SK-N-SH (cell line): ENCODE measurements at regions of chr13 and their contacts with region 1.

Region 1: GRCh38 chr13:102870677-102871415 is 25.0 kb downstream of the ERCC5 start:
- DNase-seq: peak; percentile 79
- H3K4me3 ChIP-seq: no peak overlapping the region; a peak in 1 of 4 replicates
- H3K27ac ChIP-seq: no peak overlapping the region
- H3K4me1 ChIP-seq: peaks cover 0 to 5% of the 10 kb centered on the region in 2 experiments; a peak in 1 of 4 replicates
- H3K27me3 ChIP-seq: no peaks in the 10 kb centered on the region
- CTCF ChIP-seq: peak; percentile 90
- EP300 ChIP-seq: no peak
- RAD21 ChIP-seq: peak; percentile 90

Region 2: DNA sequence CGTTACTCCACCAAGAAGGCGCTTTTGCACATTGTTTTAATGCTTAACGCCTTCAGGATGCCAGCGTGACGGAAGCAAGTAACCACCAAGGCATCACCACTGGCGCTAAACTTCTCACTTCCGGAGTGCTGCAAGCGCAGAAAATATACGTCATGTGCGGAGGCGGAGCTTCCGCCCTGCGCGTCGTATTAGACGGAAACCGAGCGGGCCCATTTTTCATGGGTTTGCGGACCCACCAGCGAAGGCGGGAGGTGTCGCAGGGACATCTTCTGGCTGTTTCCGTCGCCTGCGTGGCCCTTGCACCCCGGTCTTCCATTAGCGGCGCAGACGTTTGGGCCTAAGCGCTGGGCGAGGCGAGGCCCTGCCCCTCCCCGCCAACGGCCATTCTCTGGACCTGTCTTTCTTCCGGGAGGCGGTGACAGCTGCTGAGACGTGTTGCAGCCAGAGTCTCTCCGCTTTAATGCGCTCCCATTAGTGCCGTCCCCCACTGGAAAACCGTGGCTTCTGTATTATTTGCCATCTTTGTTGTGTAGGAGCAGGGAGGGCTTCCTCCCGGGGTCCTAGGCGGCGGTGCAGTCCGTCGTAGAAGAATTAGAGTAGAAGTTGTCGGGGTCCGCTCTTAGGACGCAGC is 25.1 kb before region 1 on chr13 and contains the start of gene ERCC5:
- CTCF ChIA-PET with region 1: interaction called, 17 read pairs
- POLR2A ChIA-PET with region 1: no interaction called
- DNase-seq: peak; percentile 81
- H3K4me3 ChIP-seq: peak within 1 kb of the TSS; percentile 96 to 99
- H3K27ac ChIP-seq: peak within 1 kb of the TSS; percentile 87 to 96
- H3K4me1 ChIP-seq: peaks cover 0 to 12% of the 10 kb centered on the region in 2 experiments; a peak in 3 of 4 replicates
- H3K27me3 ChIP-seq: no peaks in the 10 kb centered on the region
- CTCF ChIP-seq: no peak
- EP300 ChIP-seq: peak; percentile 31 to 45; a peak in 1 of 4 replicates
- RAD21 ChIP-seq: peak; percentile 27; the same call in 1 of the 2 replicates
- polyA plus RNA-seq, gene ERCC5: 14.1 and 19.0 TPM in 2 replicates

Region 3: GRCh38 chr13:102854675-102855074 is 16.2 kb before region 1 on chr13:
- CTCF ChIA-PET with region 1: interaction called, 26 read pairs
- POLR2A ChIA-PET with region 1: no interaction called
- DNase-seq: no peak
- H3K4me3 ChIP-seq: no peak overlapping the region
- H3K27ac ChIP-seq: no peak overlapping the region
- H3K4me1 ChIP-seq: peaks cover 0 to 3% of the 10 kb centered on the region in 2 experiments; a peak in 1 of 4 replicates
- H3K27me3 ChIP-seq: no peaks in the 10 kb centered on the region
- CTCF ChIP-seq: no peak
- EP300 ChIP-seq: no peak
- RAD21 ChIP-seq: no peak

Region 4: DNA sequence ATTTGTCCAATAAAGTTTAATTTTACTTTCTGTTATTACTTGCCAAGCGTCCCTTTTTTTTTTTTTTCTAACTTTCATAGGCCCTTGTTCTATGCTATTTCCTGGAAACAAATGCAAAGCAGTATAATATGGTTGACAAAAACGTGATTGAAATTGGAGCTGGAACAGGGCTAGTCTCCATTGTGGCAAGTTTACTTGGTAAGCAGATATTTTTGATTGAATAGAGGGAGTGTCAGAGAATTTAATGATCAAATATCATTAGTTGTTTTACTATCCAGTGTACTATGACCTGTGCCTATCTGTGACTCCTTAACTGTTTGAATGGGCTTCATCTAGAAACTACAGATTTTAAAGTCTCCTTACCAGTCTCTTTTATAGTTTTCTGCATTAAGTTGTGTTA is 21.7 kb after region 1 on chr13:
- CTCF ChIA-PET with region 1: interaction called, 26 read pairs
- POLR2A ChIA-PET with region 1: no interaction called
- DNase-seq: no peak
- H3K4me3 ChIP-seq: no peak overlapping the region
- H3K27ac ChIP-seq: no peak overlapping the region
- H3K4me1 ChIP-seq: no peaks in the 10 kb centered on the region
- H3K27me3 ChIP-seq: no peaks in the 10 kb centered on the region
- CTCF ChIP-seq: no peak
- EP300 ChIP-seq: no peak
- RAD21 ChIP-seq: no peak

Region 5: DNA sequence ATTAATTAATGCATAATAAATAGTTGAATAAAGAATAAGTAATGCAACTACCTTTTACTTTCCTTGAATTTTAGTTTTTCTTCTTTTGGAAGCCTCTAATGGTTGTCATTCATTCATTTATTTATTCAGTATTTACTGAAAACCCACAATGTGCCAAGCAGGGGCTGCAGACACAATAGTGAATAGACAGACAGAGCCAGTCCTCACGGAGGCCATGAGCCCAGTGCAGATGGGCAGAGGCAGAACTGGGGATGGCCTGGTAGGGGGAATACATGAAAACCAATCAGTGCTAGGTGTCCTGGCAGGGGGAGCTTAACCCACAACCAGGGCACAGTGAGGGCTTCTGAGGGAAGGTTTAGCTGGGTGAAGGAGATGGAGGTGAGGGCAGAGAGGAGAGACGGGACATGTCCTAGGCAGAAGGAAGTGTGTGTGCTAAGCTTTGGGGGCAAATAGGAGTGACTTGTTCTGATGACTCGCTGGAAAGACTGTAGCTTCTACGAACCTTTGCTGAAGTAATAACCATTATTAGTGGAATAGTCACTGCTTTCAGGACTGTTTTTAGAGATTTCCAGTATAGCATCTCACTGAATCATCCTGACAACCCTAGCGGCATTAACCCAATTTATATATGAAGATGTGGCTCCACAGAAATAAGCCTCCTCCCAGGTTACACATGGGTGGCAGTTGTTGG is 30.9 kb after region 1 on chr13:
- CTCF ChIA-PET with region 1: interaction called, 26 read pairs
- POLR2A ChIA-PET with region 1: no interaction called
- DNase-seq: no peak
- H3K4me3 ChIP-seq: no peak overlapping the region
- H3K27ac ChIP-seq: no peak overlapping the region
- H3K4me1 ChIP-seq: peaks cover 0 to 2% of the 10 kb centered on the region in 2 experiments; a peak in 2 of 4 replicates
- H3K27me3 ChIP-seq: no peaks in the 10 kb centered on the region
- CTCF ChIP-seq: no peak
- EP300 ChIP-seq: no peak
- RAD21 ChIP-seq: no peak

Region 6: GRCh38 chr13:103557878-103558277 is 687.0 kb after region 1 on chr13:
- CTCF ChIA-PET with region 1: no interaction called
- POLR2A ChIA-PET with region 1: no interaction called
- DNase-seq: no peak
- H3K4me3 ChIP-seq: no peak overlapping the region
- H3K27ac ChIP-seq: no peak overlapping the region
- H3K4me1 ChIP-seq: no peaks in the 10 kb centered on the region
- H3K27me3 ChIP-seq: no peaks in the 10 kb centered on the region
- CTCF ChIP-seq: no peak
- EP300 ChIP-seq: no peak
- RAD21 ChIP-seq: no peak